ENCODE measurements at regions of chr17 and their contacts with region 1.

Region 1: DNA sequence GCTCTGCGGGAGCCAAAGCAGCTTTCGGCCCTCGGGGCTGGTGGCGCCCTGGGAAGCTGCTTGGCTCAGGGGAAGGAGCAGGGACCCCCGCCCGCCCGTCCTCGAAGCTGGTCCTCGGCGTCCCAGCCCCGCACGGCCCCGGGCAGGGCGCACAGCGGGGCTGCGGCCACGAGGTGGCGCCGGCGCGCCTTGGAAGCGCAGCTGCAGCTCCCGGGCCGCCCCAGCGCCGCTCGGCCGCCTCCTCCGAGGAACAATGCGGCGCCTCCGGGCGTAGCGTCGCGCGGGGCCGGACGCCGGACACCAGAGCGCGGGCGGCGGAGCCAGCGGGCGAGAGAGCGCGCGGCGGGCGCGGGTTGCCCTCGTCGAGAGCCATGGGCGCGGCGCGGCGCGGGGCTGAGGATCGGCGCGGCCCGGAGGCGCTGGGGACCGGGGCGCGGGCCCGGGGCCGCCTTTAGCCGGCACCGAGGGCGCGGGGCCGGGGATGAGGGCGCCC is at the start of gene MGAT5B:
- DNase-seq: peak; percentile 89
- ATAC-seq: peak; percentile 95
- total RNA-seq, gene MGAT5B: not detected

Region 2: DNA sequence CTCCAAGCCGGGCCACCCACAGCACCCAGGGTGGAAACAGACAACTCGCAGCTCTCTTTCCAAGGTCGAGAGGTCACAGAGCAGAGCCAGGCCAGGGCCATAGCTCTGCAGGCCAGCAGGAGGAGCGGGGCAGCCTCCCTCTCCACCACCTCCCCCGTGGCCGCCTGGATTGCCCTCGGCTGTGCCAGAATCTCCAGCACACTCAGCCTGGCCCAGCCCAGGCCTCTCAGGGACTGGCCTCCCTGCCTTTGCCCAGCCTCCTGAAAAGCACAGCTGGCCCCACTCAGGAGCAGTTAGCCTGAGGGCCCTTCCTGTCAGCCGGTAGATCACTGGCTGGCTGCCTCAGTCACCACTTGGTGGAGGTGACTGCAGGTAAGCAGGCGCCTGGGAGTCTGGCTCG is 186.7 kb after region 1 on chr17:
- intact Hi-C with region 1: loop called (anchors 1 kb)
- DNase-seq: no peak
- ATAC-seq: no peak

Measured in Right ventricle myocardium inferior (tissue), 1 donor.